Esophagus muscularis mucosa (tissue), 4 donors: ENCODE measurements at regions of chr7 and their contacts with region 1.

Region 1: DNA sequence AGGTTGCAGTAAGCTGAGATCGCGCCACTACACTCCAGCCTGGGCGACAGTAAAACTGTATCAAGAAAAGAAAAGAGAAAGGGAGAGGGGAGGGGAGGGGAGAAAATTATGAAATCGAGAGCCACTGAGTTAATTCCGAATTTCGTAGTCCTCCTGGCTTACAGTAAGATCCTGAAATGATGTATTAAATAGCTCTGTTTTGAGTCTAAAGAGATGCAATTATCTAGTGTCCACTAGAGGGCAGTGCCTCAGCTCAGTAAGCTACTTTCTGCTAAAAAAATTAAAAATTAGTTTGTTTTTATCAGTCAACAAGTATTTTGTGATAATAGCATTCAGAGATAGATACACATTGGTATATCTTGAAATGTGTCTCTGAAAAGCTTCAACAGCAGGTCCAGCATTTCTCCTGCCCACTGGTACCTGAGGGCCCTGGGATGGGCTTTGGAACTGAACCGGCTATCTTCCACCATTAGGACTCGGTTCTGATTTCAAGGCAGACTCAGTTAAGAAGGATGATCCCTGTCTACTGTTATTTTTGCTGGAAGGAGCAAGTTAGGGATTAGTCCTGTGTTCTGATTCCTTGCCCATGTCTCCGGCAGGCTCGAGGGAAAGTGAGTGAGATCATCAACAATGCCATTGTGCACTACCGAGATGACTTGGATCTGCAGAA is 19.5 kb downstream of the TSPAN33 start:
- DNase-seq: no peak
- H3K4me3 ChIP-seq: no peak overlapping the region
- H3K27ac ChIP-seq: no peak overlapping the region
- H3K4me1 ChIP-seq: peaks cover 0 to 13% (median 10%) of the 10 kb centered on the region in 4 donors
- H3K27me3 ChIP-seq: no peaks in the 10 kb centered on the region
- CTCF ChIP-seq: peak; percentile 66 to 85 (median 82)
- EP300 ChIP-seq: no peak
- POLR2A ChIP-seq: no peak

Region 2: GRCh38 chr7:129210256-129210988 is 46.4 kb after region 1 on chr7:
- intact Hi-C with region 1: loop called (anchors 1 kb)
- DNase-seq: peak; percentile 95
- H3K4me3 ChIP-seq: no peak overlapping the region
- H3K27ac ChIP-seq: no peak overlapping the region
- H3K4me1 ChIP-seq: peaks cover 0 to 8% (median 3%) of the 10 kb centered on the region in 4 donors
- H3K27me3 ChIP-seq: no peaks in the 10 kb centered on the region
- CTCF ChIP-seq: peak; percentile 81 to 90 (median 83)
- EP300 ChIP-seq: no peak
- POLR2A ChIP-seq: no peak